ENCODE measurements at regions of chr14 and their contacts with region 1.

Region 1: DNA sequence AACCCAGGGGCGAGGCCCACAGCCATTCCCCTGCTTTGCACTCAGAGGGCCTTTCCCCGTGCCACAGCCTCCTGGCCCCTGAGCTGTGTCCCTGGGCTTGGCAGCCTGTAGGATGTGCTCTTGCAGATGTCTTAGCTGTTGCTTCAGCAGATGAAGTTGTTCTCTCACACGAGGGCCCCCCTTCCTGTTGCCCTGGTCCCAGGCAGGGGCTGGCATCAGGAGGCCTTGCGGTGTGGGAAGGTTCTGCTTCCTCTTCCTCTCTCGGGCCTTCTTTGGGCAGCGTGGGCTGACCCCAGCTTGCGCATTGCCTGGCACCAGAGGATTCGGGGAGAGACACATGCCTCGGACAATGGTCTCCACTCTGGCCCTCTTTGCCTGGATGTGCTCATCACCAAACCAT is 12.7 kb downstream of the PROX2 start:
- DNase-seq: no peak
- H3K4me3 ChIP-seq: no peak overlapping the region
- H3K27ac ChIP-seq: no peak overlapping the region
- H3K4me1 ChIP-seq: peaks cover 0 to 4% (median 0%) of the 10 kb centered on the region in 4 donors
- H3K27me3 ChIP-seq: peaks cover 0 to 5% of the 10 kb centered on the region in 2 donors
- CTCF ChIP-seq: no peak

Region 2: GRCh38 chr14:74905375-74906142 is 42.3 kb after region 1 on chr14:
- intact Hi-C with region 1: loop called (anchors 2 kb)
- DNase-seq: peak; percentile 62 to 81
- H3K4me3 ChIP-seq: no peak overlapping the region
- H3K27ac ChIP-seq: no peak overlapping the region
- H3K4me1 ChIP-seq: peaks cover 0 to 25% (median 15%) of the 10 kb centered on the region in 4 donors
- H3K27me3 ChIP-seq: no peaks in the 10 kb centered on the region
- CTCF ChIP-seq: peak; percentile 90 to 92

Measured in tibial artery (tissue), 4 donors.